ENCODE measurements at regions of chr9 and their contacts with region 1.

Region 1: GRCh38 chr9:114906908-114907571 is 23.4 kb downstream of the TNFSF8 start:
- DNase-seq: no peak
- ATAC-seq: no peak
- H3K4me3 Mint-ChIP-seq: no peak overlapping the region
- H3K27ac Mint-ChIP-seq: no peak overlapping the region
- H3K4me1 Mint-ChIP-seq: peaks cover 59% of the 10 kb centered on the region
- H3K27me3 Mint-ChIP-seq: no peaks in the 10 kb centered on the region
- CTCF ChIP-seq: no peak

Region 2: GRCh38 chr9:114681594-114682332 is 225.3 kb before region 1 on chr9 and contains the start of gene TEX48:
- CTCF ChIA-PET with region 1: interaction called, 15 read pairs
- POLR2A ChIA-PET with region 1: no interaction called
- intact Hi-C with region 1: loop called (anchors 1 kb)
- DNase-seq: no peak
- ATAC-seq: peak; percentile 94
- H3K4me3 Mint-ChIP-seq: no peak within 1 kb of the TSS
- H3K27ac Mint-ChIP-seq: peak within 1 kb of the TSS; percentile 36
- H3K4me1 Mint-ChIP-seq: peaks cover 5% of the 10 kb centered on the region
- H3K27me3 Mint-ChIP-seq: peaks cover 24% of the 10 kb centered on the region
- CTCF ChIP-seq: no peak
- total RNA-seq, gene TEX48: not detected in 2 replicates

Region 3: GRCh38 chr9:114738581-114739316 is 168.3 kb before region 1 on chr9:
- CTCF ChIA-PET with region 1: interaction called, 44 read pairs
- POLR2A ChIA-PET with region 1: interaction called, 4 read pairs
- intact Hi-C with region 1: loop called (anchors 1 kb)
- DNase-seq: peak; percentile 36
- ATAC-seq: peak; percentile 89
- H3K4me3 Mint-ChIP-seq: no peak overlapping the region
- H3K27ac Mint-ChIP-seq: peak overlapping the region; percentile 46
- H3K4me1 Mint-ChIP-seq: peaks cover 14% of the 10 kb centered on the region
- H3K27me3 Mint-ChIP-seq: peaks cover 3% of the 10 kb centered on the region
- CTCF ChIP-seq: peak; percentile 64

Region 4: GRCh38 chr9:114745108-114745848 is 161.8 kb before region 1 on chr9:
- CTCF ChIA-PET with region 1: interaction called, 44 read pairs
- POLR2A ChIA-PET with region 1: interaction called, 4 read pairs
- intact Hi-C with region 1: no loop called
- DNase-seq: no peak
- ATAC-seq: no peak
- H3K4me3 Mint-ChIP-seq: no peak overlapping the region
- H3K27ac Mint-ChIP-seq: no peak overlapping the region
- H3K4me1 Mint-ChIP-seq: no peaks in the 10 kb centered on the region
- H3K27me3 Mint-ChIP-seq: peaks cover 2% of the 10 kb centered on the region
- CTCF ChIP-seq: no peak

Region 5: GRCh38 chr9:114894801-114895433 is 12.1 kb before region 1 on chr9:
- CTCF ChIA-PET with region 1: interaction called, 14 read pairs
- POLR2A ChIA-PET with region 1: interaction called, 5 read pairs
- intact Hi-C with region 1: loop called (anchors 2 kb)
- DNase-seq: no peak
- ATAC-seq: no peak
- H3K4me3 Mint-ChIP-seq: no peak overlapping the region
- H3K27ac Mint-ChIP-seq: peak overlapping the region; percentile 84
- H3K4me1 Mint-ChIP-seq: peaks cover 52% of the 10 kb centered on the region
- H3K27me3 Mint-ChIP-seq: no peaks in the 10 kb centered on the region
- CTCF ChIP-seq: no peak

Region 6: GRCh38 chr9:114929201-114929600 is 22.2 kb after region 1 on chr9:
- CTCF ChIA-PET with region 1: interaction called, 4 read pairs
- POLR2A ChIA-PET with region 1: interaction called, 4 read pairs
- intact Hi-C with region 1: loop called (anchors 2 kb)
- DNase-seq: no peak
- ATAC-seq: peak; percentile 47
- H3K4me3 Mint-ChIP-seq: peak overlapping the region; percentile 80
- H3K27ac Mint-ChIP-seq: peak overlapping the region; percentile 91
- H3K4me1 Mint-ChIP-seq: peaks cover 58% of the 10 kb centered on the region
- H3K27me3 Mint-ChIP-seq: peaks cover 14% of the 10 kb centered on the region
- CTCF ChIP-seq: no peak

Region 7: DNA sequence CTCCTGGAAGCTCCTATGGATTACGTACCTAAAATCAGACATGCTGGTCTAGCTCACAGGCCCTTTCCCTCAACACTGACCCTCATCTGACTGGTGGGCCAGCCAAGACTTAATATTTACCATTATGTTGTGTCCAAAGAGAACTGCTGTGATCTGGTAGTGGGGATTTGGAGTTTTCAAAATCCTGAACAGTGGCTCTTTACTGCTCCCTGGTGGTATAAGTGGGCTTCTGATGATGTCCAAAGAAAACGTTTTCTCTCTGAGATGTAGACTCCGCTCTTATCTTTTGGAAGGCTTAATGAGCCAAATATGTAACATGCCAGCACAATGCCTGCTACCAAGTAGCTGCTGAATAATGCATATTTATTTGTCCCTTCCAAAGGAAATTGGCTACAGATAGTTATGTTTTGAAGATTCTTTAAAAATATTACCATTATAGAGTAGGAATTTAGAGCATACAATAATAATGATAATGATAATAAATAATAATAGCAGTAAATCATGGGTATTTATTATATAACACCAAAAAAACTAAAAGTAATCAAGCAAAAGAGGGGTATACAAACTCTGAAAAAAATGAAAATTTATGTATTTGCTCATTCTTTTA is 617.5 kb after region 1 on chr9:
- CTCF ChIA-PET with region 1: interaction called, 3 read pairs
- POLR2A ChIA-PET with region 1: no interaction called
- intact Hi-C with region 1: loop called (anchors 5 kb)
- DNase-seq: no peak
- ATAC-seq: peak; percentile 34
- H3K4me3 Mint-ChIP-seq: no peak overlapping the region
- H3K27ac Mint-ChIP-seq: no peak overlapping the region
- H3K4me1 Mint-ChIP-seq: no peaks in the 10 kb centered on the region
- H3K27me3 Mint-ChIP-seq: peaks cover 5% of the 10 kb centered on the region
- CTCF ChIP-seq: no peak